ENCODE measurements at regions of chr1 and their contacts with region 1.

Region 1: DNA sequence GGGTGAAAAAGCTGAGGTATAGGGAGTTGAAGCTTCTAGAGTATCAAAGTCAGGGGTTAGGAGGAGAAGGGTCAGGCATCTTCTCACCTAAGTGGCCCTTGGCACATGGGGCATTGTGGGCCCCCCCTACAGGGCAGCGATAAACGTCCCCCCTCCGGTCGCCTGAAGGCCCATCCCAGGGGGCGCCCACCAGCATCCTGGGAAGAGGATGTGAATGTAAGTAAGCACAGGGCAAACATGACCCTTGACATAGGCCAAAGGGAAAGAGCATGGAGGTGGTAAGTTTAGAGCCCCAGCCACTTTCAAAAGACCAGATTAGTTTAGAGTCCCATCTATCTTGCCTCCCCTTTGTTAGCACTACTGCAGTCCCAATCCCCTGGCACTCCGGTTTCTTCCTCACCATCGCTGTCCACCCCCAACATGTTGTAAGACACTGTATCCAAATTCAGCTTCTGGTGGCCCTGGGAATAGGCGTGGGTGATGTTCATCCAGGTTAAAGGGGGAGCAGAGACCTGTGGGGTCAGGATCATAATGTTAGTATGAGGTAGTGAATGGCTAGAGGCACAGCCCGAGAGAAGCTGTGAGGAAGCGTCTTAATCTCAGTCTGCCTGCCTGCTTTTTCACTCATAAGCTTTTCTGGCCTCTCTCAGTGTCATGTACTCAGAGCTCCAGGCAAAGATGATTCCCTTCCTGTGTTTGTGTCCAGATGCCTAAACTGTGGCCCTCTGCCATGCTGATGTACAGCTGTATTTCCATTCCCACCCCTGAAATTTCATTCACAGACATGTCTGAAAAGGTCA is 2.7 kb downstream of the ITGA10 start:
- DNase-seq: no peak
- ATAC-seq: no peak
- H3K4me3 ChIP-seq: no peak overlapping the region
- H3K27ac ChIP-seq: peak overlapping the region in 1 of 2 donors; percentile 69
- H3K4me1 ChIP-seq: no peaks in the 10 kb centered on the region
- H3K27me3 ChIP-seq: no peaks in the 10 kb centered on the region

Region 2: GRCh38 chr1:145858894-145859490 is 48.2 kb before region 1 on chr1 and contains the start of gene PIAS3:
- intact Hi-C with region 1: loop called in 1 of 2 experiments (anchors 2 kb)
- DNase-seq: peak; percentile 98 to 99
- ATAC-seq: peak; percentile 98
- H3K4me3 ChIP-seq: peak within 1 kb of the TSS; percentile 87 to 96
- H3K27ac ChIP-seq: peak within 1 kb of the TSS in 1 of 2 donors; percentile 85
- H3K4me1 ChIP-seq: peaks cover 0 to 3% of the 10 kb centered on the region in 2 donors
- H3K27me3 ChIP-seq: no peaks in the 10 kb centered on the region
- total RNA-seq, gene PIAS3: 44.5 to 60.6 TPM

Region 3: GRCh38 chr1:145871994-145872924 is 34.9 kb before region 1 on chr1:
- intact Hi-C with region 1: no loop called
- DNase-seq: peak; percentile 87 to 89
- ATAC-seq: peak; percentile 89
- H3K4me3 ChIP-seq: peak overlapping the region; percentile 32 to 36
- H3K27ac ChIP-seq: peak overlapping the region; percentile 6 to 69
- H3K4me1 ChIP-seq: no peaks in the 10 kb centered on the region
- H3K27me3 ChIP-seq: no peaks in the 10 kb centered on the region

Region 4: DNA sequence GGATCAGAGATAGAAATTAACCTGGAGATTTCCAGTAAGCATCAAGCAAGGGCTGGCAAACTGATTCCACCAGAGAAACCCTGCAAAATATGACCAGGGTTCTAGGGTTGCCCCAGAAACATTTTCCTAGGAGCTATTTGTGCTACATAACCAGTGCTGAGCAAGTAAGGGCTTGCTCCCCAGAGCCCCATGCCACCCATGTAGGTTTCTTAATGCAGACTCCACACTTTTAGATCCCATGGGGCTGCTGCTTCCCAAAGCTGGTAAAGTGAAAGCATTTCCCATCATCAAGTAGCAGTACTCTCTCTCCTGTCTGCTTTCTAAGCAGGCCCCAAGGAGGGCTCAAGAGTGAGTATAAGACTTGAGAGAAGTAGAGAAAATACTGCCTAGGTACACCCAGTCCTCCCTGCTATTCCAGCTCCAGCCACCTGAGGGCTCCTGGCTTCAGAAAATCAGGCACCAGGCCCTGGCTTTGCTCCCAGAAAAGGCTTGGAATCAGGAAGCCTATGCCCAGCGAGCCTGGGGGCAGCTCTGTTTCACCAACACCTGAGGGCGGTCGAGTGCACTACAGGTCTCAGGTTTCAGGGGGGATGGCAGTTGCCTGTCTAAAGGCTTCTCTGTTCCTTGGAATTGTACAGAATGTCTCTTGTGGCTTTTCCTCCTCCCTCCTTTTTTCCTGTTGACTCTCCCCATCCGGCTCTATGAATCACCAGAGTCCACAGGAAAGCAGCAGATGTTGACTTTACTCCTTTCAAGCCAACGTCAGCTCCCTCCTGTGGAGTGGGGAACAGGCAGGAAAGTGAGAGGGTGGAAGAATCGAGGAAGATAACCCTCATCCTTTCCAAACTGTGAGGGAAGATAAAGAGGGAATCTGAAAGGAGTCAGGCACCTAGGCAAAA is 15.3 kb before region 1 on chr1:
- intact Hi-C with region 1: loop called in 1 of 2 experiments (anchors 2 kb)
- DNase-seq: peak; percentile 94 to 96
- ATAC-seq: peak; percentile 93
- H3K4me3 ChIP-seq: no peak overlapping the region
- H3K27ac ChIP-seq: peak overlapping the region; percentile 91 to 100
- H3K4me1 ChIP-seq: peaks cover 6% of the 10 kb centered on the region in 2 donors
- H3K27me3 ChIP-seq: no peaks in the 10 kb centered on the region

Measured in aorta (tissue), 5 donors.